Right ventricle myocardium inferior (tissue), 1 donor: ENCODE measurements at regions of chr19 and their contacts with region 1.

Region 1: GRCh38 chr19:55599468-55600279 is at the start of gene FIZ1:
- DNase-seq: peak; percentile 98
- ATAC-seq: peak; percentile 91
- total RNA-seq, gene FIZ1: 14.8 TPM

Region 2: GRCh38 chr19:55549500-55550320 is 50.0 kb before region 1 on chr19:
- intact Hi-C with region 1: loop called (anchors 1 kb)
- DNase-seq: no peak
- ATAC-seq: no peak

Region 3: GRCh38 chr19:55580628-55581144 is 19.0 kb before region 1 on chr19 and contains the start of gene ZNF579:
- intact Hi-C with region 1: loop called (anchors 2 kb)
- DNase-seq: peak; percentile 85
- ATAC-seq: peak; percentile 84
- total RNA-seq, gene ZNF579: 13.1 TPM

Region 4: GRCh38 chr19:55653758-55654539 is 54.3 kb after region 1 on chr19:
- intact Hi-C with region 1: loop called (anchors 5 kb)
- DNase-seq: peak; percentile 99
- ATAC-seq: peak; percentile 82